H1 (cell line): ENCODE measurements at regions of chr15 and their contacts with region 1.

Region 1: GRCh38 chr15:29130951-29131839 is 138.4 kb downstream of the NSMCE3 start:
- DNase-seq: no peak
- H3K4me3 ChIP-seq: no peak overlapping the region
- H3K27ac ChIP-seq: no peak overlapping the region
- H3K4me1 ChIP-seq: peaks cover 0 to 3% (median under 1%) of the 10 kb centered on the region in 4 experiments; a peak in 4 of 7 replicates
- H3K27me3 ChIP-seq: no peaks in the 10 kb centered on the region
- CTCF ChIP-seq: no peak
- EP300 ChIP-seq: no peak
- POLR2A ChIP-seq: no peak
- RAD21 ChIP-seq: no peak

Region 2: GRCh38 chr15:29115093-29115991 is 15.9 kb before region 1 on chr15:
- CTCF ChIA-PET with region 1: interaction called, 26 read pairs
- POLR2A ChIA-PET with region 1: interaction called, 8 read pairs
- DNase-seq: peak in 1 of 2 experiments; percentile 79
- H3K4me3 ChIP-seq: peak overlapping the region; percentile 34 to 69 (median 48)
- H3K27ac ChIP-seq: no peak overlapping the region
- H3K4me1 ChIP-seq: peaks cover 0 to 22% (median 15%) of the 10 kb centered on the region in 4 experiments; a peak in 5 of 7 replicates
- H3K27me3 ChIP-seq: no peaks in the 10 kb centered on the region
- CTCF ChIP-seq: peak in 2 of 3 experiments; percentile 51 to 60; a peak in 3 of 4 replicates
- EP300 ChIP-seq: no peak
- POLR2A ChIP-seq: no peak
- RAD21 ChIP-seq: peak; percentile 29 to 50; a peak in 3 of 4 replicates

Region 3: GRCh38 chr15:29149738-29150075 is 18.5 kb after region 1 on chr15:
- CTCF ChIA-PET with region 1: no interaction called
- POLR2A ChIA-PET with region 1: no interaction called
- DNase-seq: no peak
- H3K4me3 ChIP-seq: no peak overlapping the region
- H3K27ac ChIP-seq: no peak overlapping the region
- H3K4me1 ChIP-seq: no peaks in the 10 kb centered on the region
- H3K27me3 ChIP-seq: no peaks in the 10 kb centered on the region
- CTCF ChIP-seq: no peak
- EP300 ChIP-seq: no peak
- POLR2A ChIP-seq: no peak
- RAD21 ChIP-seq: no peak